Caco-2 (cell line): ENCODE measurements at regions of chr3 and their contacts with region 1.

Region 1: GRCh38 chr3:31010491-31010890 is 116.0 kb upstream of the GADL1 start:
- DNase-seq: no peak
- H3K4me3 ChIP-seq: no peak overlapping the region
- H3K4me3 Mint-ChIP-seq: no peak overlapping the region
- H3K27ac Mint-ChIP-seq: peak overlapping the region; percentile 67
- H3K4me1 ChIP-seq: peaks cover 25% of the 10 kb centered on the region
- H3K4me1 Mint-ChIP-seq: peaks cover 33% of the 10 kb centered on the region
- H3K27me3 ChIP-seq: no peaks in the 10 kb centered on the region
- H3K27me3 Mint-ChIP-seq: no peaks in the 10 kb centered on the region
- CTCF ChIP-seq: no peak

Region 2: GRCh38 chr3:30779686-30780287 is 230.7 kb before region 1 on chr3:
- CTCF ChIA-PET with region 1: no interaction called
- POLR2A ChIA-PET with region 1: no interaction called
- intact Hi-C with region 1: loop called (anchors 1 kb)
- DNase-seq: peak; percentile 42 to 70
- H3K4me3 ChIP-seq: no peak overlapping the region
- H3K4me3 Mint-ChIP-seq: no peak overlapping the region
- H3K27ac Mint-ChIP-seq: no peak overlapping the region
- H3K4me1 ChIP-seq: no peaks in the 10 kb centered on the region
- H3K4me1 Mint-ChIP-seq: peaks cover 11% of the 10 kb centered on the region
- H3K27me3 ChIP-seq: no peaks in the 10 kb centered on the region
- H3K27me3 Mint-ChIP-seq: no peaks in the 10 kb centered on the region
- CTCF ChIP-seq: peak; percentile 62 to 78

Region 3: GRCh38 chr3:30904986-30905657 is 105.4 kb before region 1 on chr3:
- CTCF ChIA-PET with region 1: no interaction called
- POLR2A ChIA-PET with region 1: no interaction called
- intact Hi-C with region 1: loop called (anchors 1 kb)
- DNase-seq: peak; percentile 70 to 71
- H3K4me3 ChIP-seq: no peak overlapping the region
- H3K4me3 Mint-ChIP-seq: no peak overlapping the region
- H3K27ac Mint-ChIP-seq: peak overlapping the region; percentile 81
- H3K4me1 ChIP-seq: peaks cover 28% of the 10 kb centered on the region
- H3K4me1 Mint-ChIP-seq: peaks cover 21% of the 10 kb centered on the region
- H3K27me3 ChIP-seq: no peaks in the 10 kb centered on the region
- H3K27me3 Mint-ChIP-seq: no peaks in the 10 kb centered on the region
- CTCF ChIP-seq: no peak

Region 4: DNA sequence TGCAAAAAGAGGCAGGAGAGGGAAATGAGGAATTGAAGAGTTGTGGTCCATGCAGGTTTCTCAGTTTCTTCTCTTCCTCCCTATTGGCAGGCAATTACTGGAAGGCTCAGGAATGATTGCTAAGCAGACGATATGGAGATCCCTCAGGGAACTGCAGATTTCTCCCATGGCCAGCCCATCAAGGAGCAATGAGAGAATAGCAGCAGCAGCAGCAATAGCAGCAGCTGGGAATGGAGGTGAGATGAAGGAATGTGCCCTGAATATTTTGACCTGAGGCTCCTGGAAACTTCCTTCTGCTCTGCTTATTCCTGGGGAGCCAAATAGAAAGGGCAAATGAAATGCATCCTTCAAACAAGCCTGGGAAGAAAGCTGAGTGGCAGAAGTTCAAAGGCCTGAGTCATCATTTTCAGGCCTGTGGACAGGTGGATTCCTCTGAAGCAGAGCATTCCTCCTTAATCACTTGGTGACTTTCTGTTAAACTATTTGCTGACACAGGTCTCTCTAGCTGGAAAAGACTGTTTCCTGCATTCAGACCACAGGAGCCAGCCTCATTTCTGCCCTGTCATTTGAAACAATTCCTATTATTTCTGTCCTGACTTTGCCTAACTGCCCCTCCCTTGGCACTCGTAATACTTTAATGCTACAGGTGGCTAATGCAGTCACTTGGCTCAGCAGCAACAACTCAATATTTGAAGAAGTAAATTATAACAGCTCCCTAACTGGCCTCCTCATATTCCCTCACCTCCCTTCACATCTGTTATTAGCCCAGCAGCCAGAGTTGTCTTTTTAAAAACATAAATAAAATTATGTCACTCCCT is 30.9 kb after region 1 on chr3:
- CTCF ChIA-PET with region 1: no interaction called
- POLR2A ChIA-PET with region 1: no interaction called
- intact Hi-C with region 1: loop called (anchors 2 kb)
- DNase-seq: peak; percentile 69 to 71
- H3K4me3 ChIP-seq: no peak overlapping the region
- H3K4me3 Mint-ChIP-seq: no peak overlapping the region
- H3K27ac Mint-ChIP-seq: peak overlapping the region; percentile 88
- H3K4me1 ChIP-seq: peaks cover 17% of the 10 kb centered on the region
- H3K4me1 Mint-ChIP-seq: peaks cover 23% of the 10 kb centered on the region
- H3K27me3 ChIP-seq: no peaks in the 10 kb centered on the region
- H3K27me3 Mint-ChIP-seq: no peaks in the 10 kb centered on the region
- CTCF ChIP-seq: no peak

Region 5: DNA sequence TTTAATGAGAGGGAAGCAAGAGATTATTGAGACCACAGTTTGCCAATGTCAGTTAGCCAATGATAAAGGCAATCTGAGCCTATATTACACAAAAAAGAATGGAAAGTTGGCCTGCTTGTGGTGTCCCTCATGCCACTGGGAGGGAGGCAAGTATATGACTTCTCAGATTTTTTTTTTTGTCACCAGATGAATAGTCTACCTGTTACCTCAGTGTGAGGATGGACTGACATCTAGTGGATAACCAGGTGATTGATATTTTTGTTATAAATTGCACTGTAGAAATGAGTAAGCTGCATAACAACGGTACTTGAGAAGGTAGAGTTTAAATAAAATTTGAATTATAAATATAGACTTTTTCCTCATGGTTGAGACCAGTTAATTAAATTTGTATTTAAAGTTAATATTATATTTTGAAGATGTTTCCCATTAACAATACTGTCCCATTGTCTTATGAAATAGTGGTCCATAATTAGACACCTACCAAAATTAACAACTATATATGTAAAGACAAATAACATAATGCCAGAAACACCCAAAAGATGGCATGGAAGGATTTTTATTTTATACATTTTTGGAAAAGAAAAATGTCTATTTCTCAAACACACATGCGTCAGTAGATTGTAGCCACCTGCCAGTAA is 121.8 kb after region 1 on chr3:
- CTCF ChIA-PET with region 1: no interaction called
- POLR2A ChIA-PET with region 1: no interaction called
- intact Hi-C with region 1: loop called (anchors 1 kb)
- DNase-seq: peak in 1 of 2 experiments; percentile 60
- H3K4me3 ChIP-seq: no peak overlapping the region
- H3K4me3 Mint-ChIP-seq: no peak overlapping the region
- H3K27ac Mint-ChIP-seq: no peak overlapping the region
- H3K4me1 ChIP-seq: peaks cover 8% of the 10 kb centered on the region
- H3K4me1 Mint-ChIP-seq: no peaks in the 10 kb centered on the region
- H3K27me3 ChIP-seq: no peaks in the 10 kb centered on the region
- H3K27me3 Mint-ChIP-seq: no peaks in the 10 kb centered on the region
- CTCF ChIP-seq: peak; percentile 63 to 69